ENCODE measurements at regions of chr17 and their contacts with region 1.

Region 1: DNA sequence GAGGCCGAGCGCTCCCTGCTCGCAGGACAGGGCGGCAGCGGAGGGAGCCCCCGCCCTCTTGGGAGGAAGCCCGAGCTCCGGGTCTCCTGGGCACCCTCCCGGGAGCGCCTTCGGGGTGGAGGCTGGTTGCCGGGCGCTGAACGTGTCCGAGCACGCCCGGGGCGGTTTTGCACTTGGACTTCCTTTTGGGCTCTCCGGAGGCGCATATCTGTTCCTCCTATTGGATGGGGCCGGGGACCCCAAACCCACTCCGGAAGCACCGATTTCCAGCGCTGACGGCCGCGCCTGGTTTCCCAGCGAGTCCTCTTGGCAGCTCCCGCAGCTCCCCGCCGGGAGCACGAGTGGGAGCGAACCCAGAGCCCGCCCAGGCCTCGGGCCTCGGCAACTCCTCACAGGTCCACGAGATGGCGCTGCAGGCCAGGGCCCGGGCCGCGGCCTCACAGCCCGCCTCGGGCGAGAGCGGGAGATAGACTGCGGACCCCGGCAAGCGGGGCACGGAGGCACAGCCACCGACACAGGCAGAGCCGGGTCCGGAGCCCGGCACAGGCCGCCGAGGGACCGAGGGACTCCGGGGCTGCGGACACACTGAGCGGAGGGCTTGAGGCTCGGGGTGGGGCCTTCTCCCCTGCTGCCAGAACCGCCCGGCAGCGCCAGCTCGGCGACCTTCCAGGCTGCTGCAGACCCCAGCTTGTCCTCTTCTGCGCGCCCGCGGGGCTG is 12.7 kb downstream of the TBX2 start:
- DNase-seq: peak; percentile 69
- H3K4me3 Mint-ChIP-seq: no peak overlapping the region
- H3K27ac Mint-ChIP-seq: no peak overlapping the region
- H3K4me1 Mint-ChIP-seq: peaks cover 7% of the 10 kb centered on the region
- H3K27me3 Mint-ChIP-seq: peaks cover 51% of the 10 kb centered on the region

Region 2: DNA sequence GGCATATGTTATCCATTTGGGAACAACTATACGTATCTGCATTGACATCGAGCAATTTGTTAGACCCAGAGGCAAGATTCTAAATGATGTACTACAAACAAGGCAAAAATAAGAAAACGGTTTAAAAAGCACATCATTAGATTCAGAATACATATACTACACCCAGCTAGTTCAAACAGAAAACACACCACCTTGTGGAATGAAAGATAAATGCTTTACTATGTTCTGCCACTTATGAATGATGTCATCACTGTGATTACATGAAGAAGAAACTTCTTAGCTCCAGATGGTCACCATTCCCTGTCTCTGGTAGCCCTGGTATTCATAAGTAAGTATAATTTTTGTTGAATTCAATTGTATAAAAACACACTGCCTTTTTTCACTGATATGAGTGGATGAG is 170.9 kb after region 1 on chr17:
- intact Hi-C with region 1: loop called (anchors 5 kb)
- DNase-seq: no peak
- H3K4me3 Mint-ChIP-seq: no peak overlapping the region
- H3K27ac Mint-ChIP-seq: no peak overlapping the region
- H3K4me1 Mint-ChIP-seq: no peaks in the 10 kb centered on the region
- H3K27me3 Mint-ChIP-seq: peaks cover 22% of the 10 kb centered on the region

Region 3: GRCh38 chr17:61837175-61838051 is 425.1 kb after region 1 on chr17:
- intact Hi-C with region 1: loop called (anchors 1 kb)
- DNase-seq: no peak
- H3K4me3 Mint-ChIP-seq: no peak overlapping the region
- H3K27ac Mint-ChIP-seq: no peak overlapping the region
- H3K4me1 Mint-ChIP-seq: no peaks in the 10 kb centered on the region
- H3K27me3 Mint-ChIP-seq: no peaks in the 10 kb centered on the region

Measured in activated T-helper 1 cell treated with anti-CD3 and anti-CD28 coated beads, Interleukin-12 subunit alpha, Interleukin-12 subunit beta, Interleukin-2, Interleukin-4 antibody, amounts not matched to agents 30 ng/mL and 10 ng/mL and 1 ng/mL, durations not matched to agents 14 hours and 24 hours and 36 hours (primary cell).